ENCODE measurements at regions of chr16 and their contacts with region 1.

Region 1: DNA sequence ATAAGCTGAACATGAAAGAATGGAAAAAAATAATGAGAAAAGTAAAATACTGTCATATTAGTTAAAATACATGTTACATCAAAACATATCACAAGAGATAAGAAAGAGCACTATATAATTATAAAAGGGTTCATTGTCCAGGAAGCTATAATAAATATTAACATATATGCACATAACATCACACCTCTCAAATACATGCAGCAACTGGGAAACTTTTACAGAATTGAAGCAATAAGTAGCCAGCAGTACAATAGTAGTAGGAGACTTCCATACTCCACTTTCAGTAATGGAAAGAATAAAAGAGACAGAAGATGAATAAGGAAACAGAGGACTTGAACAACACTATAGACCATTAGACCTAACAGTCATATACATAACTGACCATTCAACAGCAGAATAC is 90.4 kb downstream of the AHSP start:
- DNase-seq: no peak
- H3K4me3 ChIP-seq: no peak overlapping the region
- H3K4me3 Mint-ChIP-seq: no peak overlapping the region
- H3K27ac Mint-ChIP-seq: no peak overlapping the region
- H3K4me1 ChIP-seq: no peaks in the 10 kb centered on the region
- H3K4me1 Mint-ChIP-seq: no peaks in the 10 kb centered on the region
- H3K27me3 ChIP-seq: no peaks in the 10 kb centered on the region
- H3K27me3 Mint-ChIP-seq: peaks cover 2% of the 10 kb centered on the region
- CTCF ChIP-seq: no peak

Region 2: GRCh38 chr16:31561426-31562233 is 56.5 kb before region 1 on chr16:
- CTCF ChIA-PET with region 1: no interaction called
- POLR2A ChIA-PET with region 1: no interaction called
- intact Hi-C with region 1: no loop called
- DNase-seq: no peak
- H3K4me3 ChIP-seq: no peak overlapping the region
- H3K4me3 Mint-ChIP-seq: no peak overlapping the region
- H3K27ac Mint-ChIP-seq: no peak overlapping the region
- H3K4me1 ChIP-seq: no peaks in the 10 kb centered on the region
- H3K4me1 Mint-ChIP-seq: no peaks in the 10 kb centered on the region
- H3K27me3 ChIP-seq: no peaks in the 10 kb centered on the region
- H3K27me3 Mint-ChIP-seq: peaks cover 5% of the 10 kb centered on the region
- CTCF ChIP-seq: no peak

Region 3: GRCh38 chr16:31807086-31807485 is 189.0 kb after region 1 on chr16:
- CTCF ChIA-PET with region 1: no interaction called
- POLR2A ChIA-PET with region 1: interaction called, 11 read pairs
- intact Hi-C with region 1: no loop called
- DNase-seq: no peak
- H3K4me3 ChIP-seq: no peak overlapping the region
- H3K4me3 Mint-ChIP-seq: no peak overlapping the region
- H3K27ac Mint-ChIP-seq: no peak overlapping the region
- H3K4me1 ChIP-seq: no peaks in the 10 kb centered on the region
- H3K4me1 Mint-ChIP-seq: no peaks in the 10 kb centered on the region
- H3K27me3 ChIP-seq: no peaks in the 10 kb centered on the region
- H3K27me3 Mint-ChIP-seq: peaks cover 3% of the 10 kb centered on the region
- CTCF ChIP-seq: no peak